Activated T-helper 1 cell treated with anti-CD3 and anti-CD28 coated beads, Interleukin-12 subunit alpha, Interleukin-12 subunit beta, Interleukin-2, Interleukin-4 antibody, amounts not matched to agents 30 ng/mL and 10 ng/mL and 1 ng/mL, durations not matched to agents 14 hours and 24 hours and 36 hours (primary cell): ENCODE measurements at regions of chr11 and their contacts with region 1.

Region 1: GRCh38 chr11:47426061-47426956 is at the start of gene PSMC3:
- DNase-seq: peak; percentile 96
- H3K4me3 Mint-ChIP-seq: peak within 1 kb of the TSS; percentile 95
- H3K27ac Mint-ChIP-seq: peak within 1 kb of the TSS; percentile 96
- H3K4me1 Mint-ChIP-seq: peaks cover 28% of the 10 kb centered on the region
- H3K27me3 Mint-ChIP-seq: no peaks in the 10 kb centered on the region
- total RNA-seq, gene PSMC3: 219 and 222 TPM in 2 replicates

Region 2: GRCh38 chr11:45917623-45918330 is 1508.5 kb before region 1 on chr11 and contains the start of gene PEX16:
- intact Hi-C with region 1: loop called (anchors 2 kb)
- DNase-seq: peak; percentile 97
- H3K4me3 Mint-ChIP-seq: peak within 1 kb of the TSS; percentile 98
- H3K27ac Mint-ChIP-seq: peak within 1 kb of the TSS; percentile 92
- H3K4me1 Mint-ChIP-seq: peaks cover 22% of the 10 kb centered on the region
- H3K27me3 Mint-ChIP-seq: peaks cover 10% of the 10 kb centered on the region
- total RNA-seq, gene PEX16: 37.4 and 44.6 TPM in 2 replicates

Region 3: DNA sequence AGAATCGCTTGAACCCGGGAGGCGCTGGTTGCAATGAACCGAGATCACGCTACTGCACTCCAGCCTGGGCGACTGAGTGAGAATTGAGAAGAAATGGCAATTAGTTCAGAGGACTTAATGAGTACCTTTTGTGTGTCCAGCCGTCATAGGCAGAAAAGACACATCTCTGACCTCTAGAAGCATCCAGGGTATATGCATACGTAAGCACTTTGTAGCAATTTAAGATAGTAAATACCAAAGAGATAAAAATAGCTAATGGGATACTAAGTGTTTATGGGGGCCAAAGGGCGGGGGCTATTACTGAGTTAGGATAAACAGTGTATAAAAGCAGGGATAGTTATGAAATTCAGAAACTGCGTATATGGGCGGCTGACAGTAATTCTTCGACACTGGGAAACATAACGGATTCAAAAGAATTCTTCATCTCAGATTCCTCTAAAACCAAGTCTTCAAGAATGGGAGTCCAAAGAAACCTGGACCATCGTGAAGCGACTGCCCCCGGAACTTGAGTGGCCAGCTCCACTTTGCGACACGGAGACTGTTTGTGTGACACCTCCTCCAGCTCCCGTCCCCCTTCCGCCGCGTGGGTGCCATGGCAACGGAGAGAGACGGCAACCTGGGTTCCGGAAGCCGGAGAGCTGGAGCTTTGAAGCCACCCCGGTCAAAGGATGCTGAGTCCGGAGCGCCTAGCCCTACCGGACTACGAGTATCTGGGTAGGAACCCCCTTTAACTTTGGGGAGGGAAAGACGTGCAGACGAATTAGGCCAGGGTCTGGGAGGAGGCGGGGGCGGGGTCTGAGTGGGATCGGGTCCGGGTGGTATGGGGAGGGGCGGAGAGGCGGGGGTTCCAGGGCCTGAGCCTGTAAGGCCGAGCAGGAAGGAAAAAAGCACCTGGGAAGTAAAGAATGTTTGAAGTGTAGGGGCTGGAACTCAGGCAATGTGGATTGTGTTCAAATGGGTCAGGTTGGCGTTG is 489.9 kb before region 1 on chr11 and contains the start of gene CSTPP1:
- intact Hi-C with region 1: loop called (anchors 2 kb)
- DNase-seq: peak; percentile 89
- H3K4me3 Mint-ChIP-seq: peak within 1 kb of the TSS; percentile 92
- H3K27ac Mint-ChIP-seq: peak within 1 kb of the TSS; percentile 88
- H3K4me1 Mint-ChIP-seq: peaks cover 14% of the 10 kb centered on the region
- H3K27me3 Mint-ChIP-seq: peaks cover 7% of the 10 kb centered on the region
- total RNA-seq, gene CSTPP1: 15.1 and 16.7 TPM in 2 replicates

Region 4: DNA sequence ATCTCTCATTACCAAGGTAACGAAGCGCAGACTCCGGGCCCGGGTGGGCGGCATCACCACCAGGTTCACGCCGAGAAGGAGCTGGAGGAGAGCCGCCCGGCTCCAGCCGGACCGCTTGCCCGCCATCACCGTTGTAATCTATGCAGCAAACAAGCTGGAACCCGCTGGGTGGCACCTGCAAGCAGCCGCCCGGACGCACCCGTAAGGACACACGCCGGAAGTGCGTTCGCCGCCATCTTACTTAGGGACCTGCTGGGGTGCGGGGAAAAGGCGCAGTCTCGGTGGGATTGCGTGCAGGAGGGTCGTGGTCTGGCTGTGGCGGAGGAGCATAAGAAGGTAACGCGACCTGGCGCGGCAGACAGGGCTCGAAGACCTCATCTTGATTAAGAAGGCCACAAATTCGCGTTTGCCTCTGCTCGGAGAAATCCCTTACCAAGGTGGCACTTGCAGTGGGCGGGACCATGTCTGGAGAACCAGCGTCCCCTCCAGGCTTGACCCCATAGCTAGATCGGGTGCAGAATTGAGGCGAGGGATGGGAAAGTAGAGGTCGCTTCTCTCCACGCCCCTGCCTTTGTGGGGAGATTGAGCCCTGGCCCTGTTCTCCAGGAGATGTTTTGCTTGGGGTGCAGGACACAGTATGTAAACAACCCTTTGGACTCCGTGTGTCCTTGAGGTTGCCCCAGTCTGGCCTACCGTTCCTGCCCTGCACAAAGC is 177.5 kb before region 1 on chr11 and contains the start of gene ACP2:
- intact Hi-C with region 1: loop called (anchors 1 kb)
- DNase-seq: peak; percentile 82
- H3K4me3 Mint-ChIP-seq: peak within 1 kb of the TSS; percentile 100
- H3K27ac Mint-ChIP-seq: peak within 1 kb of the TSS; percentile 98
- H3K4me1 Mint-ChIP-seq: peaks cover 27% of the 10 kb centered on the region
- H3K27me3 Mint-ChIP-seq: no peaks in the 10 kb centered on the region
- total RNA-seq, gene ACP2: 31.8 and 33.8 TPM in 2 replicates

Region 5: DNA sequence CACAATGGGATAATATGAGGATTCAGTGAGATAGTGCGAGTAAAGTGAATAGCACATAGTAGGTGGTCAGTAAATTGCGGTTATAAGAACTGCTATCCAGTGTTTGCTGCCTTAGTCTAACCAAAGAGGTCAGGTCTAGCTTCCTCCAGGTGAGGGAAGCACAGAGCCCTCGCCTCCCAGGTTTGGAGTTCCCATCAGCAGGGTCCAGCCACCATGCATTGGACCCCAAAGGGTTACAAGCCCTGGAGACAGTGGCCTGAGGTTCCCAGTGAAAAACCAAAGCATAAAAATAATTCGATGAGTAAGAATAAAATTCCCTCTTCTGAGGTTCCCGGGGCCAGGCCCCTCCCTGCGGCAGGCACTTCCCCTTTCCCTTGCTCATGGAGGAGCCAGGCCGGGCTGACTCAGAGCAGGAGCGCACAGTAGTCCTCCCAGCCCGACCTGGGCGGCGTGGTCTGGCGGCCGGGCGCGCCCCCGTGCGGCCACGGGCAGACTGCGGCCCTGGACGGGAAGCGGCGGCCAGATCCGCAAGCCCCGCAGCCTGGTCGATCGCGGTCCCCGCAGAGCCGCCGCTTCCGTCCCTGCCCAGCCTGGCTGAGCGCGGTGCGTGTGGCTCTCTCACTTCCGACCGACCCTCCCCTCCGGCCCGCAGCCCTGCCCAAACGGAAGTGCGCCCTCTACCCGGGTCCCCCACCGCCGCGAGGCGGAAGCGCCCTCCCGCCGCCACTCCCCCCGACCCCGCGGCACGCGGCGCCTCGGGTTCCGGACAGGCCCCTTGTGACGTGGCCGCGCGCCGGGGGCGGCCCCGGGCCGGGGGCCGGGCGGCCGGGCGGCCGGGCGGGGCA is 18.3 kb before region 1 on chr11 and contains the start of gene SLC39A13:
- intact Hi-C with region 1: loop called (anchors 1 kb)
- DNase-seq: peak; percentile 93
- H3K4me3 Mint-ChIP-seq: peak within 1 kb of the TSS; percentile 94
- H3K27ac Mint-ChIP-seq: peak within 1 kb of the TSS; percentile 92
- H3K4me1 Mint-ChIP-seq: peaks cover 21% of the 10 kb centered on the region
- H3K27me3 Mint-ChIP-seq: no peaks in the 10 kb centered on the region
- total RNA-seq, gene SLC39A13: 15.5 and 16.2 TPM in 2 replicates

Region 6: GRCh38 chr11:47578524-47579460 is 152.5 kb after region 1 on chr11 and contains the starts of genes KBTBD4 and NDUFS3:
- intact Hi-C with region 1: loop called (anchors 1 kb)
- DNase-seq: peak; percentile 89
- H3K4me3 Mint-ChIP-seq: peak within 1 kb of the TSS; percentile 96
- H3K27ac Mint-ChIP-seq: peak within 1 kb of the TSS; percentile 98
- H3K4me1 Mint-ChIP-seq: peaks cover 35% of the 10 kb centered on the region
- H3K27me3 Mint-ChIP-seq: no peaks in the 10 kb centered on the region
- total RNA-seq, gene KBTBD4: 16.3 and 19.0 TPM in 2 replicates
- total RNA-seq, gene NDUFS3: 148 and 152 TPM in 2 replicates

Region 7: GRCh38 chr11:47766305-47767227 is 340.3 kb after region 1 on chr11:
- intact Hi-C with region 1: loop called (anchors 1 kb)
- DNase-seq: peak; percentile 75
- H3K4me3 Mint-ChIP-seq: peak overlapping the region; percentile 99
- H3K27ac Mint-ChIP-seq: peak overlapping the region; percentile 100
- H3K4me1 Mint-ChIP-seq: peaks cover 28% of the 10 kb centered on the region
- H3K27me3 Mint-ChIP-seq: no peaks in the 10 kb centered on the region